ENCODE measurements at regions of chr2 and their contacts with region 1.

Region 1: GRCh38 chr2:85728883-85729824 is 24.6 kb upstream of the ATOH8 start:
- DNase-seq: peak; percentile 92 to 97
- ATAC-seq: peak; percentile 94
- H3K4me3 ChIP-seq: no peak overlapping the region
- H3K27ac ChIP-seq: no peak overlapping the region
- H3K4me1 ChIP-seq: no peaks in the 10 kb centered on the region
- H3K27me3 ChIP-seq: no peaks in the 10 kb centered on the region

Region 2: GRCh38 chr2:85655961-85656417 is 73.2 kb before region 1 on chr2:
- intact Hi-C with region 1: no loop called
- DNase-seq: peak; percentile 6 to 27
- ATAC-seq: no peak
- H3K4me3 ChIP-seq: no peak overlapping the region
- H3K27ac ChIP-seq: no peak overlapping the region
- H3K4me1 ChIP-seq: no peaks in the 10 kb centered on the region
- H3K27me3 ChIP-seq: no peaks in the 10 kb centered on the region

Region 3: DNA sequence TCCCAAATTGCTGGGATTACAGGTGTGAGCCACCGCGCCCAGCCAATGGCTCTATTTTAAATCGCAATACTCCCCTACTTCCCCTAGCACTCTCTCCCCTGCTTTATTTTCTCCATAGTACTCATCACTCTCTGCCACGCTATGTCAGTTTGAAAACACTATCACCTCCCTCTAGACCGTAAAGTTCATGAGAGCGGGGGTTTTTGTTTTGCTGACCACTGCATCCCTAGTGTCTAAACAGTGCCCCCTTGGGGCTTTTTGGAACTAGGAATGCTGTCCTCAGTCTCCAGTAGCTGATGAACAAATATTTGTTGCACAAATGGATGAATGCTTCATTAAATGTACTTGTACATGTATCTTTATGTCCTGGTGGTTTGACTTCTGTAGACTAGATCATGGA is 68.8 kb after region 1 on chr2:
- intact Hi-C with region 1: loop called in 1 of 2 experiments (anchors 5 kb)
- DNase-seq: peak in 1 of 2 donors; percentile 4
- ATAC-seq: no peak
- H3K4me3 ChIP-seq: no peak overlapping the region
- H3K27ac ChIP-seq: peak overlapping the region in 1 of 2 donors; percentile 11
- H3K4me1 ChIP-seq: no peaks in the 10 kb centered on the region
- H3K27me3 ChIP-seq: no peaks in the 10 kb centered on the region

Region 4: GRCh38 chr2:85804583-85804982 is 75.4 kb after region 1 on chr2:
- intact Hi-C with region 1: loop called (anchors 2 to 5 kb)
- DNase-seq: no peak
- ATAC-seq: no peak
- H3K4me3 ChIP-seq: no peak overlapping the region
- H3K27ac ChIP-seq: no peak overlapping the region
- H3K4me1 ChIP-seq: no peaks in the 10 kb centered on the region
- H3K27me3 ChIP-seq: no peaks in the 10 kb centered on the region

Region 5: GRCh38 chr2:85813982-85814801 is 85.0 kb after region 1 on chr2:
- intact Hi-C with region 1: loop called (anchors 1 to 2 kb)
- DNase-seq: peak; percentile 94 to 98
- ATAC-seq: peak; percentile 94
- H3K4me3 ChIP-seq: no peak overlapping the region
- H3K27ac ChIP-seq: no peak overlapping the region
- H3K4me1 ChIP-seq: peaks cover 0 to 3% of the 10 kb centered on the region in 2 donors
- H3K27me3 ChIP-seq: no peaks in the 10 kb centered on the region

Region 6: GRCh38 chr2:85852937-85853498 is 123.9 kb after region 1 on chr2:
- intact Hi-C with region 1: no loop called
- DNase-seq: peak in 1 of 2 donors; percentile 67
- ATAC-seq: no peak
- H3K4me3 ChIP-seq: no peak overlapping the region
- H3K27ac ChIP-seq: no peak overlapping the region
- H3K4me1 ChIP-seq: no peaks in the 10 kb centered on the region
- H3K27me3 ChIP-seq: no peaks in the 10 kb centered on the region

Region 7: DNA sequence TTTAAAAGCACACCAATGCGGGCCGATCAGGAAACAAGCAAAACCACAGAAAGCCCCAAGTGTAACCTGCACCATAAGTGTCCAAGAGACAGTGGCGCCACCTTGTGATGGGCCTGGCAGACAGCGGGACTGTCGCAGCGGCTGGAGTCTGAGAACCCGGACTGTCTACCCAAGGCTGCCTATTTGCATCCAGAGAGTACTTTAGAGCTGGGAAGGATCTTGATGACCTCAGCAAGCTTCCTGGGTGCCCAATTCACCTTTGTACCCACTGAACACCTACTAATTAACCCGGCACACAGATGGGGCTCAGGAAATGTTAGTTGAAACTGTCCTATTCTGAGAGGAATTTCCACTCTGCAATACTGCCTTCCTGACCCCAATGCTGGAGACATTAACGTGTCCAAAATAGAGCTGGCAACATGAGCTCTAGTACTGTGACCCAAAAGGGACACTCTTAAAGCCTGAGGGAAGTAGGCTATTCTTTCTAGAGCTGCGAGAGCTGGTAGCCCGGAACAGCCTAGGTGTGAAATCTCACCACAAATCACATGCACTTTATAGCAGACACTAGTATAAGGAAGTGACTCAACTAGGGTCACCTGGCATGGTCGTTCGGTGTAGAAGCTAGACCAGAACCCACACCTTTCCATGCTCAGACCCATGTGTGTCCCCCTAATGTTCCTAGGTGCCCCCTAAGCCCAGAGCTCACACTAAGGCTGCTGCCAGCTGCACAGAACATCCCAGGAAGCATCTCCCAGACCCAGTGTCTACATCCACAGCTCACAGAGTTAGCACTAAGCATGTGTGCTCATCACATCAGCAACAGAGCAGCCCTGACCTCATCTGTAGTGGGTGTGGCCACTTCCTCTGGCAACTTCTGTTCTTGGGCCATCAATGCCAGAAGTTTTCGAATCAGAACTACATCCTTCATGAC is 351.1 kb after region 1 on chr2:
- intact Hi-C with region 1: loop called (anchors 2 to 5 kb)
- DNase-seq: peak; percentile 89 to 94
- ATAC-seq: peak; percentile 92
- H3K4me3 ChIP-seq: no peak overlapping the region
- H3K27ac ChIP-seq: no peak overlapping the region
- H3K4me1 ChIP-seq: no peaks in the 10 kb centered on the region
- H3K27me3 ChIP-seq: no peaks in the 10 kb centered on the region